ENCODE measurements at regions of chr4 and their contacts with region 1.

Region 1: GRCh38 chr4:109574102-109574850 is 14.2 kb downstream of the MCUB start:
- DNase-seq: peak in 4 of 5 donors; percentile 31 to 45 (median 40)
- H3K4me3 ChIP-seq: no peak overlapping the region
- H3K4me3 Mint-ChIP-seq: peak overlapping the region; percentile 4 to 79 (median 50)
- H3K27ac ChIP-seq: no peak overlapping the region
- H3K27ac Mint-ChIP-seq: peak overlapping the region; percentile 10 to 88 (median 59)
- H3K4me1 ChIP-seq: peaks cover 63% of the 10 kb centered on the region
- H3K4me1 Mint-ChIP-seq: peaks cover 52 to 80% (median 67%) of the 10 kb centered on the region in 4 donors
- H3K27me3 ChIP-seq: no peaks in the 10 kb centered on the region
- H3K27me3 Mint-ChIP-seq: no peaks in the 10 kb centered on the region

Region 2: DNA sequence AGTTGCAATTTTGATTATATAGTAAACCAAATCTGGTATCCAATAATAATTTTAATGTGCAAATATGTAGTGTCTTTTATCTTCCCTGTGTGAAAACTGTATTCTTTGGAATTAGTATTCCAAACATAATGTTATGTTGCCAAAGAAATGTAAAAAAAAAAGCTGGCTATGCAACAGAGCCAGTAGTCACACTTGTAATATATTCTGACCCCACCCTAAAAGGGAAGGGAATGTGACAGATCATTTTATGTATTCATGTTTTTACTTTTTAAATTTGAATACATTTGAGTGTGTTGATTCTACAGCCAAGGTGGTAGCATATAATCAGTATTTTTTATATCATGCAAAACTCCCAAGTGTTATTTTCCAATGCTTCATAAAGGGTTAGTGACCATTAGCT is 42.1 kb before region 1 on chr4:
- CTCF ChIA-PET with region 1: interaction called, 5 read pairs
- POLR2A ChIA-PET with region 1: no interaction called
- intact Hi-C with region 1: loop called (anchors 5 kb)
- DNase-seq: no peak
- H3K4me3 ChIP-seq: no peak overlapping the region
- H3K4me3 Mint-ChIP-seq: no peak overlapping the region
- H3K27ac ChIP-seq: no peak overlapping the region
- H3K27ac Mint-ChIP-seq: no peak overlapping the region
- H3K4me1 ChIP-seq: no peaks in the 10 kb centered on the region
- H3K4me1 Mint-ChIP-seq: no peaks in the 10 kb centered on the region
- H3K27me3 ChIP-seq: no peaks in the 10 kb centered on the region
- H3K27me3 Mint-ChIP-seq: no peaks in the 10 kb centered on the region

Region 3: DNA sequence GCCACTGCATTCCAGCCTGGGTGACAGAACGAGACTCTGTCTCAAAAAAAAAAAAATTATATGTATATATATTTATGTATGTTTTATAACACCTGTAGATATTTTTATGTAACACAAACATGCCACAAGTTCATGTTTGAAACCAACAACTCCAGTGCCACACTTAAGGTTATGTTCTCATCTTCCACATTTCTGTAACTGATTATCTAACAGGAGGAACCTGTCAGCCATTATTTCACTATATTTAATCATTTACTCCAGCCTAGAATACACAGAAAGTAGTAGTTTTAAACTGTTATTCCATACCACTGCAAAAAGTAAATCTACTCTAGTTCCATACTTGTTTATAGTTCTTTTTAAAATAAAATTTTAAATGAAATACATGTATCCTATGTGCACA is 18.1 kb after region 1 on chr4:
- CTCF ChIA-PET with region 1: interaction called, 3 read pairs
- POLR2A ChIA-PET with region 1: no interaction called
- intact Hi-C with region 1: loop called (anchors 2 kb)
- DNase-seq: no peak
- H3K4me3 ChIP-seq: no peak overlapping the region
- H3K4me3 Mint-ChIP-seq: no peak overlapping the region
- H3K27ac ChIP-seq: no peak overlapping the region
- H3K27ac Mint-ChIP-seq: peak overlapping the region in 2 of 7 donors; percentile 32 to 84
- H3K4me1 ChIP-seq: peaks cover 45% of the 10 kb centered on the region
- H3K4me1 Mint-ChIP-seq: peaks cover 35 to 58% (median 47%) of the 10 kb centered on the region in 4 donors
- H3K27me3 ChIP-seq: no peaks in the 10 kb centered on the region
- H3K27me3 Mint-ChIP-seq: no peaks in the 10 kb centered on the region

Measured in CD4-positive, alpha-beta memory T cell (primary cell).